Vagina (tissue), 2 donors: ENCODE measurements at regions of chr2 and their contacts with region 1.

Region 1: GRCh38 chr2:44612276-44612675 is 250.5 kb downstream of the CAMKMT start:
- DNase-seq: no peak
- H3K4me3 ChIP-seq: no peak overlapping the region
- H3K27ac ChIP-seq: no peak overlapping the region
- H3K4me1 ChIP-seq: no peaks in the 10 kb centered on the region
- H3K27me3 ChIP-seq: no peaks in the 10 kb centered on the region
- CTCF ChIP-seq: no peak
- POLR2A ChIP-seq: no peak

Region 2: DNA sequence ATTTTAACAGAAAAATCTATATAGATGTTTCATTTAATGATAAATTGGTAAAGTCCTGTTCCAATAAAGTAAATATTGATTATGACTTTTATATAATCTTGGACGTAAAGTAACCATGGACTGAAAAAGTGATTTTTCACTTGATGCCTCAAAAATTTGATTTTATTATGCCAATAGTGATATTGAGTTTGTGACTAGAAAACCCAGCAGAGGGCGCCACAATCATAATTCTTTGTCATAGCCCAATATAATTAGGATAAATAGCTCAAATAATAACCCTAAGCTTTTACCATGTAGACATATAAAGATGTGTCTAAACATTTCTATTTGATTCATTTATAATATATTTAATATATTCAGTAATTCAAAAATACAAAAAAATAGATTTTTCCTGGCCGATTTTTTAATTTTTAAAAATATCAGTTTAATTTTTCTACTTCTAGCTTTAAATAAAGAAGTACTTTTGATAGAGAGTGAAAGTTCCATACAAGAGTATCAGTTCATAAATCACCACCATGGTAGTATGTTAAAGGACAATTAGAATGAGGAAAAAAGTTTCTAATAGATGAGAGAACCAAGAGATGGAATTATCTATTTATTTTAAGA is 219.8 kb before region 1 on chr2:
- intact Hi-C with region 1: no loop called
- DNase-seq: no peak
- H3K4me3 ChIP-seq: no peak overlapping the region
- H3K27ac ChIP-seq: no peak overlapping the region
- H3K4me1 ChIP-seq: no peaks in the 10 kb centered on the region
- H3K27me3 ChIP-seq: no peaks in the 10 kb centered on the region
- CTCF ChIP-seq: peak in 2 of 3 experiments; percentile 32 to 48
- POLR2A ChIP-seq: no peak

Region 3: DNA sequence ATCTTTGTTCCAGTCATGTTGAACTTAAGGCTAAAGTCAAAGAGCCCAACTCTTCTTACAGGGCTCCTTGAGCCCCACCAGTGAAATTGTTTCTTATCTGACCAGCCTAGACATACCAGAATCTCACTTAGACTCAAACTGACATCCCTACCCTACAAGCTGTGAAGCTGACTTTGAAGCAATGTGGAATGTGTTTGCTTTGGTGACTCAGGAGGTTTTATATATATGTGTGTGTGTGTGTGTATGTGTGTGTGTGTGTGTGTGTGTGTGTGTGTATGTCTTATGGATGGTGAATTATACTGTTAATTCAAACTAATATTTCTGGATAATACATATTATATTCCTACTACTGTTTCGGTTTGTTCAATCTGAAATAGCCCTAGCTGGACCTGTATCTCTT is 183.2 kb before region 1 on chr2:
- intact Hi-C with region 1: no loop called
- DNase-seq: no peak
- H3K4me3 ChIP-seq: no peak overlapping the region
- H3K27ac ChIP-seq: no peak overlapping the region
- H3K4me1 ChIP-seq: no peaks in the 10 kb centered on the region
- H3K27me3 ChIP-seq: no peaks in the 10 kb centered on the region
- CTCF ChIP-seq: no peak
- POLR2A ChIP-seq: no peak

Region 4: DNA sequence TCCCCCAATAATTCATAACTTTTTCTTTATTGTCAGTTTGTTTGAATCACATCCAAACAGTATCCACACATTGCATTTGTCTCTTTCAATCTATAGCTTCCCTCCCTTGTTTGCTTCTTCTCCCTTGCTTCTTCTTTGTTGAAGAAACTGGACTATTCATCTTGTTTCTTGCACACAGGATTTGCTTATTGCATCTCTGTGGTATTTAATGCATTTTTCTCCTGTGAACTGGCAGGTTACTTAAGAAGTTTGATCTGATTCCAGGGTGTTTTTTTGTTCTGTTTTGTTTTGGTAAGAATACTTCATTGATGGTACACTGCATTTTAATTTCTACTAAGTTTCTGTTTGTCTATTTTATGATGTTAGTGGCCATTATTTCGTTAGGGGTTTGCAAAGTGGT is 83.7 kb before region 1 on chr2:
- intact Hi-C with region 1: no loop called
- DNase-seq: no peak
- H3K4me3 ChIP-seq: no peak overlapping the region
- H3K27ac ChIP-seq: no peak overlapping the region
- H3K4me1 ChIP-seq: no peaks in the 10 kb centered on the region
- H3K27me3 ChIP-seq: no peaks in the 10 kb centered on the region
- CTCF ChIP-seq: no peak
- POLR2A ChIP-seq: no peak

Region 5: GRCh38 chr2:44676379-44676778 is 64.1 kb after region 1 on chr2:
- intact Hi-C with region 1: loop called (anchors 2 kb)
- DNase-seq: no peak
- H3K4me3 ChIP-seq: no peak overlapping the region
- H3K27ac ChIP-seq: no peak overlapping the region
- H3K4me1 ChIP-seq: no peaks in the 10 kb centered on the region
- H3K27me3 ChIP-seq: no peaks in the 10 kb centered on the region
- CTCF ChIP-seq: no peak
- POLR2A ChIP-seq: no peak